Aorta (tissue), 5 donors: ENCODE measurements at regions of chr21 and their contacts with region 1.

Region 1: DNA sequence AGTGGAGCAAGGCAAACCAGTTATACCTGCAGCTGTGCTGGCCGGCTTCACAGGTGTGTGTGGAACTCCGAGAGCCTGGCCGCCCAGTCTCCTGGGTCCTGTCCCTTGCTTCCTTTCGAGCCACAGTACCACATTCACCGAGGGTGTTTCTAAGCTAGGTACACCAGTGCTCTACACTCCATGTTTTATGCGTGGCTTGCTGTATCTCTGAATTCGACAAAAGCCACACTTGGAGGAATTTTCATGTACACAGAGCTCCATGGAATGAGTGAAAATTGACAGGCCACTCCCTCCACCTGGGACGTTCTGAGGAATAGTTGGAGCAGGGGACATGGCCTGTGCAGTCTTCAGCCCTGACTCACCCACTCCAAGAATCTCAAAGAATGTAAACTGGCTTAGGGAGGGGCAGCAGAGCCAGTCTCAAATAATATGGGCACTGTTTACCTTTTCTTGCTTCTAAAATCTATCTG is 14.0 kb downstream of the ETS2 start:
- DNase-seq: no peak
- ATAC-seq: no peak
- H3K4me3 ChIP-seq: no peak overlapping the region
- H3K27ac ChIP-seq: peak overlapping the region; percentile 29
- H3K4me1 ChIP-seq: peaks cover 0 to 4% of the 10 kb centered on the region in 2 donors
- H3K27me3 ChIP-seq: no peaks in the 10 kb centered on the region

Region 2: GRCh38 chr21:37717534-37717933 is 1102.2 kb before region 1 on chr21:
- intact Hi-C with region 1: no loop called
- DNase-seq: no peak
- ATAC-seq: no peak
- H3K4me3 ChIP-seq: no peak overlapping the region
- H3K27ac ChIP-seq: no peak overlapping the region
- H3K4me1 ChIP-seq: no peaks in the 10 kb centered on the region
- H3K27me3 ChIP-seq: no peaks in the 10 kb centered on the region

Region 3: DNA sequence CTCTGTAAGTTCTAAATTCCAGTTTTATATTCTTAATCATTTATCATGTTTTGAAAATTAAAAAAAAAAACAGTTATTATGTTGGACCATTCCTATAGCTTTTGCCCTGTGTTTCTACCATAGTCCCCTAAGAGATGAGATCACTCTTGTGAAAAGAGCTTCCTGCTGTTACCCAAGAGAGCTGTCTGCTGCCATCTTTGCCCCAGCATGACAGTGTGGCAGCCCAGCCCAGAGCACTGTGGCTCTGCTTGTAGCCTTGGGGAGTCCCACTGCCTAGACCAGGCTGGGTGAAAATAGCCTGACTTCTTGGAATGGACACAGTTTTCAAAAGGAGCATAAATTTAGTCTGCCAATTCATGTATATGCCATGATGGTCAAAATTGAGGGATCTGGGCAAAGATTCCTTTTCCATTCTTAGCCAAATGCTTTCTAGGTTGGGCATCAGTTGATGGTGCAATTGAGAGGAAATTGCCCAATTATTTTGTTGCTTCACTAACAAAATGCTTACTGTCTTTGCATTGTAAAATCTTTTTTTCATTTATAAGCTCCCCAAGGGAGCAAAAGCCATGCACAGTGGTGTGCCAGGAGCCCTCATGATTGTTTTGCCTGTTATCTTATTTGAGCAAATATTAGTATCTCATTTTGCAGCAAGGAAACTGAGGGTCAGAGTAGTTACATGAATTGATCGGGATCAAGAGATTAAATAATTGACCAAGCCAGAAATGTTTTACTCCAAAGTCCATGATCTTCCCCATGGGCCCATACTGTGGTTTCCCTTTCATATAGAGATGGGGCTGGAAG is 58.8 kb after region 1 on chr21:
- intact Hi-C with region 1: no loop called
- DNase-seq: no peak
- ATAC-seq: no peak
- H3K4me3 ChIP-seq: no peak overlapping the region
- H3K27ac ChIP-seq: no peak overlapping the region
- H3K4me1 ChIP-seq: no peaks in the 10 kb centered on the region
- H3K27me3 ChIP-seq: no peaks in the 10 kb centered on the region

Region 4: GRCh38 chr21:38913120-38913892 is 93.6 kb after region 1 on chr21:
- intact Hi-C with region 1: loop called in 1 of 2 experiments (anchors 5 kb)
- DNase-seq: peak; percentile 75 to 93
- ATAC-seq: peak; percentile 79
- H3K4me3 ChIP-seq: no peak overlapping the region
- H3K27ac ChIP-seq: peak overlapping the region in 1 of 2 donors; percentile 30
- H3K4me1 ChIP-seq: peaks cover 0 to 3% of the 10 kb centered on the region in 2 donors
- H3K27me3 ChIP-seq: no peaks in the 10 kb centered on the region

Region 5: GRCh38 chr21:38920631-38921398 is 101.1 kb after region 1 on chr21:
- intact Hi-C with region 1: loop called in 1 of 2 experiments (anchors 2 kb)
- DNase-seq: no peak
- ATAC-seq: peak; percentile 10
- H3K4me3 ChIP-seq: no peak overlapping the region
- H3K27ac ChIP-seq: peak overlapping the region; percentile 46 to 49
- H3K4me1 ChIP-seq: peaks cover 0 to 9% of the 10 kb centered on the region in 2 donors
- H3K27me3 ChIP-seq: no peaks in the 10 kb centered on the region

Region 6: DNA sequence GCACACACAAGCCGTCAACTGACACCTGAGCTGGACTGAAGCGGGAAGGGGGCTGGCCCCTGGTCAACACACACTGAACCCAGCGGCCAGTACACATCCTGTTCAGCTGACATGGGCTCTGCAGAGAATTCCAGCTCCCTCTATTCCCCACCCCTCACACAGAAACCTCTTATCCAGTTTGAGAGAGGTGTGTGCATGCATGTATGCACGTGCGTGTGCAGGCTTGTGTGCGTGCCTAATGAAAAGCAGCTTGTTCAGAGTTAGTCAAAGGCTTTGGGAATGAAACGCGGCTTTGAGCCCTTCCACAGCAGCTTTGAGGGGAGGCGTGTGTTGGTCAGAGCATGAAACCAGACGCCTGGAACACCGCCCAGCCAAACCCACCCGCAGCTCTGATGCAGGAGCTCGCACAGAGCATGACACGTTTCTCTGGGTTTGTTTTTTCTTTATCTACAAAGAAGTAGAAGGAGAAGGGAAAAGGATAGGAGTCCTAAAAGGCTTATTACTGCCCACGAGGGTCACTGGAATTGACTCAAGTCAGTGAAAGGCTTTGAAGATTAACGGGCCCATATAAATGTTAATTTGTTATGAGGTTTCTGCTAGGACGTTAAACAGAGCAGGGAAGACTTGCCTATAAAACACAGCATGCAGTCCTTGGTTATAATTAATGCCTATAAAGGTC is 170.1 kb after region 1 on chr21:
- intact Hi-C with region 1: loop called in 1 of 2 experiments (anchors 5 kb)
- DNase-seq: no peak
- ATAC-seq: no peak
- H3K4me3 ChIP-seq: no peak overlapping the region
- H3K27ac ChIP-seq: no peak overlapping the region
- H3K4me1 ChIP-seq: peaks cover 2 to 4% of the 10 kb centered on the region in 2 donors
- H3K27me3 ChIP-seq: no peaks in the 10 kb centered on the region

Region 7: GRCh38 chr21:39022863-39023693 is 203.3 kb after region 1 on chr21:
- intact Hi-C with region 1: loop called in 1 of 2 experiments (anchors 5 kb)
- DNase-seq: peak; percentile 88 to 94
- ATAC-seq: peak; percentile 77
- H3K4me3 ChIP-seq: no peak overlapping the region
- H3K27ac ChIP-seq: peak overlapping the region; percentile 9 to 92
- H3K4me1 ChIP-seq: peaks cover 0 to 4% of the 10 kb centered on the region in 2 donors
- H3K27me3 ChIP-seq: no peaks in the 10 kb centered on the region

Region 8: DNA sequence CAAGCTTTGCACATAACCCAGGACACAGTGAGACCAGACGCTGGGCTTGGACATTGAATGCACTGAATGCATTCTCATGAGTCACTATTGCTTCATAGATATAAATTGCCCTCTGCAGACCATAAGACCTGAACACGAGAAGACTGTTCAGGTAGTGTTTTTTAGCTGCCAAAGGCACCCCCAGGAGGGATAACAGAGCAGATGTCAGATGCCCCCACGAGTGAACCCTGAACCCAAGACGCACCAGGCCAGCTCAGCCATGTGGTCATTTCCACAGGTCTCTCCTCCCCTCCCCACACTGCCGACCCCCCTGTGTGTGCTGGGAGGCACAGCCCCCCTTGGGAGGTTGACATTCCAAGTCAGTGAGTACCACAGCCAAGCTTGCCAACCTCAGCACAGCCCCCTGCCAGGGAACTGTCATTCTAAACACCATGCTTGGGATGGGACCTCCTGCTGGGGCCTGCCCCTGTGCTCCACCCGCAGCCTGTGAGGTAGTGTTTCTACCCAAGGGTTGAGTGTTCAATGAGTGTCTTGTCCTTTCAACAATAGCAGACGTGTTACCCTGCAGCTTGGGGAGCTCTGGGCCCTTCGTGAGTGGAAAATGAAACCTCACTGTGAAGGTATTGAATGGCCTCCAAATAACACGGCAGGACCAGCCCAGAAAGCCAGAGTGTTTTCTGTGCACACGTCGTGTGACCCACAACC is 295.3 kb after region 1 on chr21:
- intact Hi-C with region 1: loop called in 1 of 2 experiments (anchors 5 kb)
- DNase-seq: peak; percentile 69 to 79
- ATAC-seq: peak; percentile 37
- H3K4me3 ChIP-seq: no peak overlapping the region
- H3K27ac ChIP-seq: peak overlapping the region in 1 of 2 donors; percentile 19
- H3K4me1 ChIP-seq: peaks cover 0 to 7% of the 10 kb centered on the region in 2 donors
- H3K27me3 ChIP-seq: no peaks in the 10 kb centered on the region